PC-3 (cell line): ENCODE measurements at regions of chr1 and their contacts with region 1.

Region 1: DNA sequence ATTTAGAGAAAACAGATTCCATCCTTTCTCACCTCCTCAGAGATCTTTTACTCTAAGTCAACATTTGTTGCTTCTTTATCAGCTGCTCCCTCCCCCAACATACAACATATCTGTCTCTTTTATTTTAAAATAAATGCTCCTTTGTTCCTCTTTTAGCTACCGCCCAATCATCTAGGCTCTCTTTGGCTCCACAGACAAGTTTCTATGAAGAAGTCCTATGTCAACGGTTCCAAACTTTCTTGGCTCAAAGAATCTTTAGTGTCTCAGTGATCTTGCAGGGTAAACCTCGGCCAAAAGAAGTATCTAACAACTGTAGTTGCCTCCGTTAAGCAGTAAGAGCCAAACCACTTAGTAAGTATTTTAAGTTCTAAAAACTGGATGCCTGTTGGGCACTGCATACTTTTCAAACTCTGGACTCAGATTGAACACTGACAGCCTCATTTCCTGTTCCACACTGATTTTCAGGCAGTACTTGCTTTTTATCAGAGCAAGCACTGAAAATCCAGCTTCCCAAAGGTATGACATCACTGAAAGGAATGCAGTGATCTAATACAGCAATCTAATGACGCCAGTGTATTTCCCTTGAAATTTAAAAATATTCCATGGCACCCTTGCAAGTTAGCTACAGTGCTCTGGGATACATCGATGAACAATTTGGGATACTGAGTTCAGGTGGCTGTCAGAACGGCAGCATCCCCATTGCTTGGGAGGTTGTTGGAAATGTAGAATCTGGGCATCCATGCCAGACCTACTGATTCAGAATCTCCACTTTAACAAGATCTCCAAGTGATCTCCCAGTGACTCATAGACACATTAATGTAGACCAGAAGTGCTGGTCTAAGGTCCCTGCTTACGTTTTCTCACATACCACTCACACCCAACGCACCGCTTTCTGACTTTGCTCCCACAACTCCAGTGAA is 26.8 kb downstream of the EGLN1 start:
- DNase-seq: peak; percentile 88
- ATAC-seq: peak; percentile 90
- H3K4me3 ChIP-seq: peak overlapping the region; percentile 14; the same call in 1 of the 2 replicates
- H3K27ac ChIP-seq: peak overlapping the region; percentile 88
- H3K4me1 ChIP-seq: peaks cover 33% of the 10 kb centered on the region
- H3K27me3 ChIP-seq: no peaks in the 10 kb centered on the region
- CTCF ChIP-seq: no peak

Region 2: GRCh38 chr1:231383159-231383860 is 12.0 kb before region 1 on chr1:
- CTCF ChIA-PET with region 1: no interaction called
- POLR2A ChIA-PET with region 1: no interaction called
- intact Hi-C with region 1: no loop called
- DNase-seq: peak; percentile 41
- ATAC-seq: no peak
- H3K4me3 ChIP-seq: no peak overlapping the region
- H3K27ac ChIP-seq: no peak overlapping the region
- H3K4me1 ChIP-seq: peaks cover 33% of the 10 kb centered on the region
- H3K27me3 ChIP-seq: no peaks in the 10 kb centered on the region
- CTCF ChIP-seq: no peak

Region 3: GRCh38 chr1:231442735-231443134 is 47.4 kb after region 1 on chr1:
- CTCF ChIA-PET with region 1: no interaction called
- POLR2A ChIA-PET with region 1: interaction called, 10 read pairs
- intact Hi-C with region 1: no loop called
- DNase-seq: no peak
- ATAC-seq: no peak
- H3K4me3 ChIP-seq: no peak overlapping the region
- H3K27ac ChIP-seq: no peak overlapping the region
- H3K4me1 ChIP-seq: no peaks in the 10 kb centered on the region
- H3K27me3 ChIP-seq: no peaks in the 10 kb centered on the region
- CTCF ChIP-seq: no peak

Region 4: GRCh38 chr1:231478800-231479199 is 83.5 kb after region 1 on chr1:
- CTCF ChIA-PET with region 1: no interaction called
- POLR2A ChIA-PET with region 1: no interaction called
- intact Hi-C with region 1: no loop called
- DNase-seq: no peak
- ATAC-seq: no peak
- H3K4me3 ChIP-seq: no peak overlapping the region
- H3K27ac ChIP-seq: no peak overlapping the region
- H3K4me1 ChIP-seq: no peaks in the 10 kb centered on the region
- H3K27me3 ChIP-seq: no peaks in the 10 kb centered on the region
- CTCF ChIP-seq: no peak

Region 5: DNA sequence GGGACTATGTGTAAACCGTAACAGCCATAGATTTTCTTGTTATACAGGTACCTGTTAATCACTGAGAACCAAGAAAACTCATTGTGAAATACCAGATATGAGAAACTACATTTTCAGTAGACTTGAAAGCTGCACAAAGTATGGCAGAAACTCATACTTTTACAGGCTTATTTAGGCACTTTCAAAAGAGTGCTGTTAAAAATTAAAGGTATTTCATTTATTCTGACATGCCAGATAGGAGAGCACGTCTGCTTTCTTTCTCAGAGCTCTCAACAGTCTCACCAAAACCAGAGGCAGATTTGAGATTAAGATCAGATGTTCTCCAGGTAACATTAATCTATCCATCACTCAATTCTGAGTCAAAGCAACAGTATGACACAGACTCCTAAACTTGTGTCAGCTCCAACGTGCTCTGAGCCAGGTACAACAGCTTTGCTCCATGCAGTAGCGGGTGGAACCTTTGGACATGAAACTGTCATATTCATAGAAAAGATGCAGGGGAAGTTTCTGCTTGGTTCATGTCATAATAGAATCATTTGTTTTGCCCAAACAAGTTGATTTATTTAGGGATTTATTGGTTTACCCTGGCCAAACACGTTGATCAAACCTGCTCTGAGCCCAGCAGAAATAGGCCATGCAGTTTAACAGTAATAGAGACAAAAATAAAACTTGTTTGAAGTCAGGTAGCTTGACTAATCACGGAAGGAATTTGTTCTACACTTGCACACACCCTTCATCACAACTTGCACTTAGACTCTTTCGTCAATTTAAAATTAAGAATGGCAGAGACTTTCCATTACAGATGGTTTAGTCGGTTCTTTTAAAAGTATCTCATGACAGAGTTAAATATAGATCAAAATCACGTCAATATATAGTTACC is 112.4 kb after region 1 on chr1:
- CTCF ChIA-PET with region 1: no interaction called
- POLR2A ChIA-PET with region 1: no interaction called
- intact Hi-C with region 1: no loop called
- DNase-seq: peak; percentile 50
- ATAC-seq: peak; percentile 47
- H3K4me3 ChIP-seq: no peak overlapping the region
- H3K27ac ChIP-seq: peak overlapping the region; percentile 16
- H3K4me1 ChIP-seq: peaks cover 20% of the 10 kb centered on the region
- H3K27me3 ChIP-seq: no peaks in the 10 kb centered on the region
- CTCF ChIP-seq: no peak

Region 6: GRCh38 chr1:231544943-231545592 is 149.7 kb after region 1 on chr1:
- CTCF ChIA-PET with region 1: no interaction called
- POLR2A ChIA-PET with region 1: no interaction called
- intact Hi-C with region 1: no loop called
- DNase-seq: no peak
- ATAC-seq: no peak
- H3K4me3 ChIP-seq: no peak overlapping the region
- H3K27ac ChIP-seq: no peak overlapping the region
- H3K4me1 ChIP-seq: no peaks in the 10 kb centered on the region
- H3K27me3 ChIP-seq: no peaks in the 10 kb centered on the region
- CTCF ChIP-seq: no peak